ENCODE measurements at regions of chrX and their contacts with region 1.

Region 1: DNA sequence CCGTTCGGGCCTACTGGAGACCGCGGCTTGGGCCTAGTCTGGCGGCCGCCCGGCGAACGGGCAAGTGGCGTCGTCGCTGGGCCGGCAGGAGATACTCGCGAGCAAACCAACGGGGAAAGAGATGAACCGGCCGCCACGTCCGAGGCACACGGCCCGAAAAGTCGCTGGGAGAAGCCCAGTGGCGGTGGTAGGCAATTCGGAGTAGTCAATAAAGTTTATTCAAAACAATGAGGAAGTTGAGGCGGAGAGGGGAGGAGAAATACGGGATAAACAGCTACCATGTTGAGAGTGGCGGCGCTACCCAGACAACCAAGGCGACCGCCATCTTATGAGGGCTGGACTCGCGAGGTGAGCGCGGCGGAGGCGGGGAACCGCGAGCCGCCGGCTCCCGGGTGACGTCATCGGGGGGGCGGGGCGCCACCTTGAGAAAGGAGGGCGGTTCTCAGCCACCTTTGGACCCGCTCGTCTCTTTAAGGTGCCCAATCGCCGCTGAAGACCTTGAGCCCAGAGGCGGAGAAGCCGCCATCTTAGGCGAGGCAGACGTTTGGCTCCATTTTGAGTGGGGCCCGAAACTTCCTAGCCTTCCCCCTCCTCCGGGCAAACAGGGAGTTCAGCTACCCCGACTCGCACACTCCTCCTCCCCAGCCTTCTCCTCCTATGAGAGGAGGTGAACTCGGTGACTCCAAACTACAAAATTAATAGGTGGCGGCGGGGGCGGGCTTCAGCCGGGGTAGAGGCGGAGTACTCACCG is at the start of gene PHF8:
- DNase-seq: peak; percentile 84 to 96 (median 94)
- ATAC-seq: peak; percentile 90
- H3K4me3 ChIP-seq: peak within 1 kb of the TSS; percentile 80
- H3K4me3 Mint-ChIP-seq: peak within 1 kb of the TSS; percentile 84 to 96 (median 94)
- H3K27ac ChIP-seq: peak within 1 kb of the TSS; percentile 95
- H3K27ac Mint-ChIP-seq: peak within 1 kb of the TSS; percentile 93 to 99 (median 97)
- H3K4me1 ChIP-seq: peaks cover 9% of the 10 kb centered on the region in 2 donors
- H3K4me1 Mint-ChIP-seq: peaks cover 8 to 33% (median 17%) of the 10 kb centered on the region in 7 donors
- H3K27me3 ChIP-seq: no peaks in the 10 kb centered on the region
- H3K27me3 Mint-ChIP-seq: no peaks in the 10 kb centered on the region
- total RNA-seq, gene PHF8: 48.5 to 80.2 (median 54.5) TPM

Region 2: GRCh38 chrX:53224860-53225797 is 819.2 kb before region 1 on chrX and contains the start of gene KDM5C:
- CTCF ChIA-PET with region 1: no interaction called
- POLR2A ChIA-PET with region 1: no interaction called
- intact Hi-C with region 1: loop called (anchors 5 to 10 kb)
- DNase-seq: peak; percentile 65 to 97 (median 94)
- ATAC-seq: peak; percentile 88
- H3K4me3 ChIP-seq: peak within 1 kb of the TSS; percentile 94
- H3K4me3 Mint-ChIP-seq: peak within 1 kb of the TSS; percentile 93 to 100 (median 96)
- H3K27ac ChIP-seq: peak within 1 kb of the TSS; percentile 93
- H3K27ac Mint-ChIP-seq: peak within 1 kb of the TSS; percentile 96 to 100 (median 98)
- H3K4me1 ChIP-seq: peaks cover 25 to 27% of the 10 kb centered on the region in 2 donors
- H3K4me1 Mint-ChIP-seq: peaks cover 12 to 56% (median 40%) of the 10 kb centered on the region in 7 donors
- H3K27me3 ChIP-seq: no peaks in the 10 kb centered on the region
- H3K27me3 Mint-ChIP-seq: peaks cover 0 to 4% (median 0%) of the 10 kb centered on the region in 5 donors
- total RNA-seq, gene KDM5C: 104 to 216 (median 132) TPM

Region 3: GRCh38 chrX:53714580-53715345 is 329.5 kb before region 1 on chrX:
- CTCF ChIA-PET with region 1: no interaction called
- POLR2A ChIA-PET with region 1: no interaction called
- intact Hi-C with region 1: loop called in 1 of 2 experiments (anchors 10 kb)
- DNase-seq: peak; percentile 7 to 59 (median 41)
- ATAC-seq: peak; percentile 84
- H3K4me3 ChIP-seq: peak overlapping the region; percentile 39
- H3K4me3 Mint-ChIP-seq: peak overlapping the region; percentile 61 to 92 (median 78)
- H3K27ac ChIP-seq: peak overlapping the region; percentile 78
- H3K27ac Mint-ChIP-seq: peak overlapping the region; percentile 84 to 98 (median 89)
- H3K4me1 ChIP-seq: peaks cover 30 to 42% of the 10 kb centered on the region in 2 donors
- H3K4me1 Mint-ChIP-seq: peaks cover 25 to 53% (median 51%) of the 10 kb centered on the region in 7 donors
- H3K27me3 ChIP-seq: no peaks in the 10 kb centered on the region
- H3K27me3 Mint-ChIP-seq: no peaks in the 10 kb centered on the region

Region 4: GRCh38 chrX:54157561-54157960 is 113.3 kb after region 1 on chrX:
- CTCF ChIA-PET with region 1: no interaction called
- POLR2A ChIA-PET with region 1: no interaction called
- intact Hi-C with region 1: no loop called
- DNase-seq: no peak
- ATAC-seq: no peak
- H3K4me3 ChIP-seq: no peak overlapping the region
- H3K4me3 Mint-ChIP-seq: no peak overlapping the region
- H3K27ac ChIP-seq: no peak overlapping the region
- H3K27ac Mint-ChIP-seq: no peak overlapping the region
- H3K4me1 ChIP-seq: no peaks in the 10 kb centered on the region
- H3K4me1 Mint-ChIP-seq: peaks cover 0 to 9% (median 0%) of the 10 kb centered on the region in 7 donors
- H3K27me3 ChIP-seq: no peaks in the 10 kb centered on the region
- H3K27me3 Mint-ChIP-seq: no peaks in the 10 kb centered on the region

Region 5: DNA sequence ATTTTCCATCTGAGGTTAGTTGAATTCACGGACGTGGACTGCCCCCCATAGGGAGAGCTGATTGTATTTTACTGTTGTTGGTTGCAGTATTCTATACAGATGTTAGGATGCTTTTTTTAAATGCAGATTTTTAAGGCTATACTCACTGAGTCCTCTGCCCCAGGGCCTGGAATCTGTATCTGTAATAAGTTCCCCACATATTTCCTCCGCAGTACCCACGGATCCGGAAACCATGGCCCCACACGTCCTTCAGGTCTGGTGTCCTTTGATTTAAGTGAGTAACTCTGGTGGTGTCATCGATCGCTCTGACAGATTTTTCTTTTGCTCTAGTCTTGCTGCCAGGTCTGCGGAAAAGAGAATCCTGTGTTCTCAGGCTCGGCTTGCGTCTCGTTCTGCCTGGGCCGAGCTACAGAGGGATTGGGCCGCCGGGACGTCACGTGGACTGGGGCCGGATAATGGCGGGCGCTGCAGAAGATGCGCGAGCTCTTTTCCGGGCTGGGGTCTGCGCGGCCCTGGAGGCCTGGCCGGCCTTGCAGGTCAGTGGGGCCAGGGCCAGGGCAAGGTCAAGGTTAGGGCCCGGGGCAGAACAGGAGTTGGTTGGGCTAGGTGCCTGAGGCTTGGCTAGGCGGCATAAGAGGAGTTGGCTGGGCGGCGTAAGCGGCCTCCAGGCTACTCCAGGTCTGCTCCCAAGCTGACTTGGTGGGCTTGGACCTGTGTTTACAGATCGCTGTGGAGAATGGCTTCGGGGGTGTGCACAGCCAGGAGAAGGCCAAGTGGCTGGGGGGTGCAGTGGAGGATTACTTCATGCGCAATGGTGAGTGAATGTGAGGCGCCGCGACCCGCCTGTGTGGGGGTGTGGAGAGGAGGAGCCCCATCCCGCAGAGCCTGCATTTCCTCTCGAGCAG is 395.9 kb after region 1 on chrX and contains the start of gene TSR2:
- CTCF ChIA-PET with region 1: no interaction called
- POLR2A ChIA-PET with region 1: interaction called, 6 read pairs
- intact Hi-C with region 1: loop called in 1 of 2 experiments (anchors 1 kb)
- DNase-seq: peak; percentile 50 to 80 (median 74)
- ATAC-seq: peak; percentile 99
- H3K4me3 ChIP-seq: peak within 1 kb of the TSS; percentile 94
- H3K4me3 Mint-ChIP-seq: peak within 1 kb of the TSS; percentile 84 to 100 (median 92)
- H3K27ac ChIP-seq: peak within 1 kb of the TSS; percentile 81
- H3K27ac Mint-ChIP-seq: peak within 1 kb of the TSS; percentile 73 to 94 (median 86)
- H3K4me1 ChIP-seq: peaks cover 8 to 12% of the 10 kb centered on the region in 2 donors
- H3K4me1 Mint-ChIP-seq: peaks cover 15 to 39% (median 26%) of the 10 kb centered on the region in 7 donors
- H3K27me3 ChIP-seq: no peaks in the 10 kb centered on the region
- H3K27me3 Mint-ChIP-seq: no peaks in the 10 kb centered on the region
- total RNA-seq, gene TSR2: 33.6 to 43.3 (median 40.5) TPM

Region 6: DNA sequence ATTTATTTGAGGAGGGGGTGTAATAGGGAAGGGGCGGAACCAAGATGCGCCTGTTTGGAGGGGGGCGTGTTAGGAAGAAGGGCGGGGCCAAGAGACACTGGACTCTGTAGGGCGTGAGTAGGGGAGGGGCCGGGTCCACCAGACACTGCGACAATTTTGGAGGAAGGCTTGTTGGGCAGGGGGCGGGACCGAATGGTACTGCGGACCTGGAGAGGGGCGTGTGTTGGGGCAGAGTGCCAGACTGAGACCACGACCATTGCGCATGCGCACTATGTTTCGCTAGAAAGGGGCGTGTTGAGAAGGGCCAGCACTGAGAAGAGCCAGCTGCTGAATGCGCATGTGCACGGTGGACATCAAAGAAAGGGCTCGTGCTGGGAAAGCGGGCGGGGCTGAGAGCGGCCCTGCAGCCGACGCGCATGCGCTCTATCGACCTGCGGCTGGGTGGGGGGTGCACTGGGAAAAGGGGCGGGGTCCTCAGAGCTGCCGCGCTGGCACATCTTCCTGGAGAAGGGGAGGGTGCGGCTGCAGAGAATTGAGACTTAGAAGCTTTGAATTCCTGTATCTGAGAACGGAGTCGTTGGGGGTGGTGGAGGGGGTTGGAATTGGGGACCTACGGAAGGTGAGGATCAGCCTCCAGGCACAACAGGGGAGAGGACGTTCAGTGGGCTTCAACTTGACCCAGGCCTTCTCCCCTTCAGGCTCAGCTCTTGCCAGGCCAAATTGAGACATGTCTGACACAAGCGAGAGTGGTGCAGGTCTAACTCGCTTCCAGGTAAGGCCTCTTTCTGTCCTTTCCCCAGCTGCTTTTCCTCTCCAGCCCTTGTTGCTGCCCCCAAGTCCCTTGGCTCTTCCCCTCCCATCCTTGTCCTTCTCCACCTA is 764.5 kb after region 1 on chrX:
- CTCF ChIA-PET with region 1: no interaction called
- POLR2A ChIA-PET with region 1: no interaction called
- intact Hi-C with region 1: loop called in 1 of 2 experiments (anchors 1 kb)
- DNase-seq: peak; percentile 63 to 90 (median 84)
- ATAC-seq: peak; percentile 84
- H3K4me3 ChIP-seq: peak overlapping the region; percentile 93
- H3K4me3 Mint-ChIP-seq: peak overlapping the region; percentile 90 to 99 (median 96)
- H3K27ac ChIP-seq: peak overlapping the region; percentile 89
- H3K27ac Mint-ChIP-seq: peak overlapping the region; percentile 93 to 98 (median 96)
- H3K4me1 ChIP-seq: no peaks in the 10 kb centered on the region
- H3K4me1 Mint-ChIP-seq: peaks cover 5 to 28% (median 19%) of the 10 kb centered on the region in 7 donors
- H3K27me3 ChIP-seq: no peaks in the 10 kb centered on the region
- H3K27me3 Mint-ChIP-seq: peaks cover 0 to 25% (median 0%) of the 10 kb centered on the region in 5 donors